ENCODE measurements at regions of chr11 and their contacts with region 1.

Region 1: DNA sequence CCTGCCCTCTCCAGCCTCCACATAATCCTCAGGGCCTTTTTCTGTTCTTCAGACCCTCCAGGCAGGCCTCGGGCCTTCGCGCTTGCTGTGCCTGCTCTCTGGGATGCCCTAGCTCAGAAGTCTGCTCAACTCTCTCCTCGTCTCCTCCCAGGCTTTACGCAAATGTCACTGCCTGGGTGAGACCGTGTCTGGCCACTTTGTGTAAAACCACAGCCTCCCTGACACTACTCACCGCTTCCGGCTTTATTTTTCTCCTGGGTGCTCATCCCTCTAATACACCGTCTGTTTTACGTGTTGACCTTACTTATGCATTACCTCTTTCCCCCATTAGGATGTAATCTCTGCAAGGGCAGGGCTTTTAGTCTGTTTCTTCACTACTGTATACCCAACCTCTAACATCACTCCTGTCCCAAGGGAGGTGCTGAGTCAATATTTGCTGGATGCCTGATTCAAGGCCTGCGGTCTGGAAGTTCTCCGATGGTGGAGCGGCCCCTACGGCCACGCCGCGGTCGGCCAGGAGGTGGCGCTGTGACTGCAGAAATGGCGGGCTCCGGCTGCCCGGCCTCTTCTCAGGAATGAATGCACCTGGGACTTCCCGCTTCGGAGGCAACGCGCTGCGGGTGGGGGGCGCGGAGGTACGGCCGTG is 58.2 kb upstream of the THY1 start:
- DNase-seq: peak in 1 of 2 experiments; percentile 100
- H3K4me3 ChIP-seq: peak overlapping the region in 2 of 4 experiments; percentile 19 to 50; a peak in 3 of 8 replicates
- H3K27ac ChIP-seq: no peak overlapping the region
- H3K4me1 ChIP-seq: 0 out of 7 replicates have a peak, but pooled peaks cover 0 to 2% (median 0%) of the 10 kb centered on the region in 4 experiments
- H3K27me3 ChIP-seq: no peaks in the 10 kb centered on the region; a peak in 2 of 7 replicates
- CTCF ChIP-seq: peak; percentile 95 to 98 (median 98)
- EP300 ChIP-seq: no peak
- POLR2A ChIP-seq: no peak
- RAD21 ChIP-seq: peak; percentile 97 to 98

Region 2: GRCh38 chr11:119248750-119249670 is 232.1 kb before region 1 on chr11:
- CTCF ChIA-PET with region 1: no interaction called
- POLR2A ChIA-PET with region 1: no interaction called
- DNase-seq: no peak
- H3K4me3 ChIP-seq: no peak overlapping the region
- H3K27ac ChIP-seq: no peak overlapping the region
- H3K4me1 ChIP-seq: no peaks in the 10 kb centered on the region
- H3K27me3 ChIP-seq: no peaks in the 10 kb centered on the region
- CTCF ChIP-seq: no peak
- EP300 ChIP-seq: no peak
- POLR2A ChIP-seq: no peak
- RAD21 ChIP-seq: no peak

Region 3: GRCh38 chr11:119334174-119334930 is 146.8 kb before region 1 on chr11 and contains the start of gene RNF26:
- CTCF ChIA-PET with region 1: interaction called, 11 read pairs
- POLR2A ChIA-PET with region 1: interaction called, 3 read pairs
- DNase-seq: peak; percentile 95 to 98
- H3K4me3 ChIP-seq: peak within 1 kb of the TSS; percentile 92 to 96 (median 96)
- H3K27ac ChIP-seq: peak within 1 kb of the TSS; percentile 89
- H3K4me1 ChIP-seq: peaks cover 4 to 24% (median 18%) of the 10 kb centered on the region in 4 experiments
- H3K27me3 ChIP-seq: peaks cover 3 to 8% (median 6%) of the 10 kb centered on the region in 4 experiments; a peak in 6 of 7 replicates
- CTCF ChIP-seq: no peak
- EP300 ChIP-seq: no peak
- POLR2A ChIP-seq: peak in 1 of 2 experiments; percentile 88; a peak in 2 of 3 replicates
- RAD21 ChIP-seq: no peak
- total RNA-seq, gene RNF26: 82.7 and 86.6 TPM in 2 replicates

Region 4: GRCh38 chr11:119373921-119374631 is 107.1 kb before region 1 on chr11:
- CTCF ChIA-PET with region 1: interaction called, 336 read pairs
- POLR2A ChIA-PET with region 1: interaction called, 3 read pairs
- DNase-seq: peak in 1 of 2 experiments; percentile 97
- H3K4me3 ChIP-seq: no peak overlapping the region
- H3K27ac ChIP-seq: no peak overlapping the region
- H3K4me1 ChIP-seq: peaks cover 8 to 51% (median 36%) of the 10 kb centered on the region in 4 experiments
- H3K27me3 ChIP-seq: peaks cover 0 to 3% (median 0%) of the 10 kb centered on the region in 4 experiments; a peak in 1 of 7 replicates
- CTCF ChIP-seq: peak; percentile 82 to 92 (median 89)
- EP300 ChIP-seq: no peak
- POLR2A ChIP-seq: no peak
- RAD21 ChIP-seq: peak; percentile 92 to 95

Region 5: DNA sequence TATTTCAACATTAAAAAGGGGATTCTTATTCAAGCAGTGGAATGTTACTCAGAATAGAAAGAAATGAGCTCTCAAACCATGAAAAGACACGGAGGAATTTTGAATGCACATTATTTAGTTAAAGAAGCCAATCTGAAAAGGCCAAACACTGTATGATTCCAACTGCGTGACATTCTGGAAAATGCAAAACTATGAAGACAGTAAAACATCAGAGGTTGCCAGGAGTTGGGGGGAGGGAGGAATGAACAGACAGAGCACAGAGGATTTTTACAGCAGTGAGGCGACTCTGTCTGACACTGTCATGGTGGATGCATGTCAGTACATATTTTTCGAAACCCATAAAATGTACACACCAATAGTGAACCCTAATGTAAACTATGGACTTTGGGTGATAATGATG is 35.3 kb before region 1 on chr11:
- CTCF ChIA-PET with region 1: no interaction called
- POLR2A ChIA-PET with region 1: no interaction called
- DNase-seq: no peak
- H3K4me3 ChIP-seq: no peak overlapping the region
- H3K27ac ChIP-seq: no peak overlapping the region
- H3K4me1 ChIP-seq: peaks cover 0 to 6% (median 1%) of the 10 kb centered on the region in 4 experiments; a peak in 1 of 7 replicates
- H3K27me3 ChIP-seq: 0 out of 7 replicates have a peak, but pooled peaks cover 0 to 3% (median 0%) of the 10 kb centered on the region in 4 experiments
- CTCF ChIP-seq: no peak
- EP300 ChIP-seq: no peak
- POLR2A ChIP-seq: no peak
- RAD21 ChIP-seq: no peak

Region 6: DNA sequence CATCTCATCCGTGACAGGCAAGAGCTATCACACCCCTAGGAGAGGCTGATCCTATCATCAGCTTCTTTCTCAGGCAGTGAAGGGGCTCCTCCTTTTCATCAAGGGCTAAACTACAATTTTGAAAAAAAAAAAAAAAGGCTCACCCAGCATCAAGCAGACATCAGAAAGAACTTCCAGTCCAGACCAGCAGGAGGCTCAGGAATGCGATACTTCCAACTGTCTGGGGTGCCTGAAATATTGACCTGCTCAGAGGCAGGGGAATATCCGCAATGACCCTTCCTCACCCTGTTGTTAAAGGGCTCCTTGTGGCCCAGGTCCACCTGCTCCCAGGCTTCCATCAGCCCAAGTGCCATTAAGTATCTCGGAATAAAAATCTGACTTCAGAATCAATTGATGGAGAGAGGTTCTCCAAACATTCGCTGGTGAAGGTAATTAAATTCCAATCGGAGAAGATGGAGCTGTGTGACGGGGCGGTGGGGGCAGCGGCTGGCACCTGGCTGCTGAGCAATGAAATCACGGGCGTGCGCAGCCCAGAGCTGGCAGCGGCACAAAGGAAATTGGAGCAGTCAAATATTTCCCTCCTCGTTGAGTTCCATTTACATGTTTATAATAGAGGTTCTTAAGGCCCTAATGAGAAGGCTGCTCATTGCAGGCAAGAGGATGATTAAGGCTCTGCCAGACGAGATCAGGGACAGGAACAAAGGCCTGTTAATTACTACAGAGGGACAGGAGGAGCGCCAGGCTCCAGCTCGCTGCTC is 10.8 kb after region 1 on chr11:
- CTCF ChIA-PET with region 1: interaction called, 39 read pairs
- POLR2A ChIA-PET with region 1: no interaction called
- DNase-seq: no peak
- H3K4me3 ChIP-seq: no peak overlapping the region
- H3K27ac ChIP-seq: no peak overlapping the region
- H3K4me1 ChIP-seq: peaks cover 0 to 5% (median 2%) of the 10 kb centered on the region in 4 experiments; a peak in 5 of 7 replicates
- H3K27me3 ChIP-seq: no peaks in the 10 kb centered on the region
- CTCF ChIP-seq: peak in 1 of 3 experiments; percentile 13; a peak in 2 of 4 replicates
- EP300 ChIP-seq: no peak
- POLR2A ChIP-seq: no peak
- RAD21 ChIP-seq: peak in 1 of 2 experiments; percentile 38; a peak in 2 of 4 replicates

Region 7: DNA sequence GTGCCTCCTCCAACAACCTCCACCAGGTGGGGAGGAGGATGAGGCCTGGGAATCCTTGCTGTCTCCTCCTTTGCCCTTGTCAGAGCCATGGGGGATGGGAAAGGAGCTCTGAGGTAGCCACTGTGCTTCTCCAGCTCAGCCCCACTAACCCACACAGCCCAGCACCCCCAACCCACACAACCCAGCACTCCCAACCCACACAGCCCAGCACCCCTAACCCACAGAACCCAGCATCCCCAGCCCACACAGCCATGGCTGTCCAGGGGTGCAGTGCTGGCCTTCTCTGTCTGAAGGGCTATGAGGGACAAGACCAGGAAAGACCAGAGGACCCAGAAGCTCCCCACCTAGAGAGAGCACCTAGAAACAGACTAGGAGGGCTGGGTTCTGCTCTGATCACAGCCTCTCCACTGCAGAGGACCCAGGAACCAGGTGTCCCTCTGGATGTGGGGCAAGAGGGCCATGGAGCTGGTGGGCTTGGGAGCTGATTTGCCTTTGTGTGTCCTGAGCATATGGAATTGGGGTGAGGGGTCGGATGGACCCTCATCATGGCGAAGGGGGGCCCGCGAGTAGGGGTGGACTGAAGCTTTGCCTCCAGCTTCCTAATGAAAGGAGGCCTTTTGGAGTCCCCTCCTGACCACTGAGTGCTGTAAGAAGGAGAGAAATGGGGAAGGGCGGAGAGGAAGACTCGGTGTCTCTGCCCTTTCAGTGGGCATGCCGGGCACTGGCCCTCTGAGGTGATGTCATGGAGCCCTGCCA is 59.4 kb after region 1 on chr11:
- CTCF ChIA-PET with region 1: interaction called, 160 read pairs
- POLR2A ChIA-PET with region 1: no interaction called
- DNase-seq: peak in 1 of 2 experiments; percentile 28
- H3K4me3 ChIP-seq: no peak overlapping the region
- H3K27ac ChIP-seq: no peak overlapping the region
- H3K4me1 ChIP-seq: no peaks in the 10 kb centered on the region
- H3K27me3 ChIP-seq: peaks cover 0 to 3% (median 0%) of the 10 kb centered on the region in 4 experiments; a peak in 1 of 7 replicates
- CTCF ChIP-seq: no peak
- EP300 ChIP-seq: no peak
- POLR2A ChIP-seq: no peak
- RAD21 ChIP-seq: no peak

Region 8: GRCh38 chr11:119651802-119652584 is 170.8 kb after region 1 on chr11:
- CTCF ChIA-PET with region 1: interaction called, 11 read pairs
- POLR2A ChIA-PET with region 1: no interaction called
- DNase-seq: no peak
- H3K4me3 ChIP-seq: no peak overlapping the region
- H3K27ac ChIP-seq: no peak overlapping the region
- H3K4me1 ChIP-seq: peaks cover 3 to 12% (median 6%) of the 10 kb centered on the region in 4 experiments
- H3K27me3 ChIP-seq: no peaks in the 10 kb centered on the region; a peak in 1 of 7 replicates
- CTCF ChIP-seq: no peak
- EP300 ChIP-seq: no peak
- POLR2A ChIP-seq: no peak
- RAD21 ChIP-seq: no peak